Activated CD4-positive, alpha-beta T cell treated with anti-CD3 and anti-CD28 coated beads for 36 hours (primary cell): ENCODE measurements at regions of chr5 and their contacts with region 1.

Region 1: DNA sequence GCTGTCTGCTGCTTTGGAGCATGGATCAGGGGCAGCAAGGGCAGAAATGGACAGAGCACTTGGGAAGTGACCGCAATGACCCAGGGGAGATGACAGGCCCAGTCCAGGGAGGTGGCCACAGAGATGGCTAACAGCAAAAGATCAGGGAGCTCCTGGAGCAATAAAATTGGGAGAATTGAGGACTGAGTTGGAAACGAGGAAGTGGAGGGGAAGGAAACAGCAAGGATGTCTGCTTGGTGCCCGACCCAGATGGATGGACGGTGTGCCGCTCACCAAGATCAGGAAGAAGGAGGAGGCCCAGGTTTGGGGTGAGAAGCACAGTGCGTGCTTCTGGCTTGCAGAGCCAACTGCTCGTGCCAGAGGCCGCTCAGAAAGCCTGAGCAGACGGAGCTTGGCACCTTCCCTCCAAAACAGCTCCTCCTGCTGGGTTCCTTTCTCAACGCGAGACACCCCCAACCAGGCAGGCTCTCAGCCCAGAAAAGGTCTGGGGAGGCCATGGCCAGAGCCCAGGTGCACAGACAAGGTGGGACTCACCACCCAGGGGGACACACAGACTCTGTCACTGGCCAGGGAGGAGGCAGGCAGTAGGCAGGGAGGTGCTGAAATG is 1.7 kb upstream of the SLC34A1 start:
- DNase-seq: peak; percentile 64
- ATAC-seq: peak; percentile 34
- H3K4me3 Mint-ChIP-seq: no peak overlapping the region
- H3K27ac Mint-ChIP-seq: peak overlapping the region; percentile 26
- H3K4me1 Mint-ChIP-seq: peaks cover 31% of the 10 kb centered on the region
- H3K27me3 Mint-ChIP-seq: peaks cover 1% of the 10 kb centered on the region

Region 2: DNA sequence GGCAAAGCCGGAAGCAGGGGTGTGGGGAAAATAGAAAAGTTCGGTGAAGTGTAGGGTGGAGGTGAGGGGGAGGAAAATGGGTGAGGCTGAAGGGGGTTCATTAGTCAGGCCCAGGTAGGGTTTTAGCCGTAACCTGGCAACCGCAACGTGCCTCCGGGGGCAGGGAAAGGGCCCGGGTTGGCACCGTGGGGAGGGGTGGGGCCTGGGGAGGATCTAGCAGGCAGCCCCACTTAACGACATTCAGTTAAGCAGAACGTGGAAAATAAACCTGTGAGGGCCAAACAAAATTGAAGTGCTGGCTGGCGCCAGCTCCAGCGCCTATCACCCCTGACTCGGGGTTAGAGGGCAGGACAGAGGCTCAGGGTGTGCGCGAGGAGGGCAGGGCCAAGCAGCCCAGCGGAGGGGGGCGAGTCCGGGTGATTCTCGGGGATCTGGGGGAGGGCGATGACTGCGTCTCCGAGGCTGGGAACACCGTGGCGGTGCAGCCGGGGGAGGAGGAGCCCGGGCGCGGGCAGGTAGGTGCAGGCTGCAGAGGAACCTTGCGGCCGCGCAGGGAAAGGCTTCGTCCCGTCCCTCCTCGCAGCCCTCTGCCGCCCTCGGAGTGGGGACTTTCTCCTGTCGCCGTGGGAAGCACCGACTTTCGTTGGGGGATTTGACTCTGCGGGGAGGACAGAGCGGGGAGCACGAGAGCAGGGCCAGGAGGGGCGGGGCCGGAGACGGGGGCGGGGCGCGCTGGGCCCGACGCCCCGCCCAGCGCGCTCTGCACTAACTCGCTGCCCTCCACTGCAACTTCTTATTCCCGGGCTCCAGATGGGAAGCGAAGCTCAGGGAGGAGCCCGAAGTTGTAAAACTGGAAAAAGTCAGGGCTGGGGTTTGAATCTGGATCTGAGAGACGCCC is 19.7 kb before region 1 on chr5:
- CTCF ChIA-PET with region 1: interaction called, 7 read pairs
- POLR2A ChIA-PET with region 1: no interaction called
- intact Hi-C with region 1: loop called in 1 of 2 experiments (anchors 1 kb)
- DNase-seq: peak; percentile 84
- ATAC-seq: peak; percentile 68
- H3K4me3 Mint-ChIP-seq: peak overlapping the region; percentile 67
- H3K27ac Mint-ChIP-seq: peak overlapping the region; percentile 82
- H3K4me1 Mint-ChIP-seq: peaks cover 74% of the 10 kb centered on the region
- H3K27me3 Mint-ChIP-seq: no peaks in the 10 kb centered on the region

Region 3: GRCh38 chr5:177370488-177371119 is 11.9 kb before region 1 on chr5:
- CTCF ChIA-PET with region 1: interaction called, 34 read pairs
- POLR2A ChIA-PET with region 1: interaction called, 3 read pairs
- intact Hi-C with region 1: no loop called
- DNase-seq: peak; percentile 76
- ATAC-seq: peak; percentile 66
- H3K4me3 Mint-ChIP-seq: peak overlapping the region; percentile 53
- H3K27ac Mint-ChIP-seq: no peak overlapping the region
- H3K4me1 Mint-ChIP-seq: peaks cover 70% of the 10 kb centered on the region
- H3K27me3 Mint-ChIP-seq: no peaks in the 10 kb centered on the region